CD8-positive, alpha-beta memory T cell (primary cell): ENCODE measurements at regions of chr14 and their contacts with region 1.

Region 1: DNA sequence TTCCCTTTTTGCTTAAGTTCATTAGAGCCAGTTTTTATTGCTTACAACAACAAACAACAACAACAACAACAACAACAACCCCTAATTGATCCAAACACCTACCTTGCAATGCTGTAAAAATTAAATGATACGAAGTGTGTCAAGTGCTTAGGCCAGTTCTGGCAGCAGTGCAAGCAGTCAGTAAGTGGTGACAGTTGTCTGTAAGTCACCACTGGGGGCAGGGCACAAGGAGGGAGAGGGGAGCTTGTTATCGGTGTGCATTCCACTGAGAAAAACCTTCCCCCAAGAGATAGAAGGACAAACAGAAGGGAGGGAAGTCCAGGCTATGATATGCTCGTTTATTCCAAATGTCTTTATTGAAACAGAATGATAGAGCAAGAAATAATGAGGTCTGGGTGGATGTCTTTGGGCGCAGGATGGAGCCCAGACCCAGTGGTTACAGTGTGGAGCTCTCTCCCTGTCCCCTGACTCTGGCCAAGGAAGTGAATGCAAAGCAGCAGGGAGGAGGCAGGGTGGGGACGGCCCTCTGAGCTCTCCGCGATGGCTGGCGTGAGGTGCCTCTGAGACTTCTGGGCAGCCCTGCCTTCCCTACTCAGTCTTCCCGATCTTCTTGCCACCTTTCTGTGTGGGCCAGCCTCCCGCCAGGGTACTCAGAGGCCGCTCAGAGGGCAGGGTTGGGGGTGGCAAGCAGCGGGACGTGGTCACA is 6.5 kb downstream of the SLC22A17 start:
- DNase-seq: no peak
- H3K4me3 ChIP-seq: no peak overlapping the region
- H3K4me3 Mint-ChIP-seq: no peak overlapping the region
- H3K27ac ChIP-seq: no peak overlapping the region
- H3K27ac Mint-ChIP-seq: no peak overlapping the region
- H3K4me1 ChIP-seq: no peaks in the 10 kb centered on the region
- H3K4me1 Mint-ChIP-seq: peaks cover 1 to 2% (median 2%) of the 10 kb centered on the region in 3 donors
- H3K27me3 ChIP-seq: no peaks in the 10 kb centered on the region
- H3K27me3 Mint-ChIP-seq: peaks cover 11 to 40% of the 10 kb centered on the region in 2 donors

Region 2: GRCh38 chr14:23186913-23187654 is 159.1 kb before region 1 on chr14:
- CTCF ChIA-PET with region 1: no interaction called
- POLR2A ChIA-PET with region 1: interaction called, 17 read pairs
- DNase-seq: peak in 1 of 5 donors; percentile 41
- H3K4me3 ChIP-seq: no peak overlapping the region
- H3K4me3 Mint-ChIP-seq: no peak overlapping the region
- H3K27ac ChIP-seq: no peak overlapping the region
- H3K27ac Mint-ChIP-seq: no peak overlapping the region
- H3K4me1 ChIP-seq: peaks cover 8% of the 10 kb centered on the region
- H3K4me1 Mint-ChIP-seq: no peaks in the 10 kb centered on the region
- H3K27me3 ChIP-seq: no peaks in the 10 kb centered on the region
- H3K27me3 Mint-ChIP-seq: peaks cover 4 to 20% of the 10 kb centered on the region in 2 donors

Region 3: DNA sequence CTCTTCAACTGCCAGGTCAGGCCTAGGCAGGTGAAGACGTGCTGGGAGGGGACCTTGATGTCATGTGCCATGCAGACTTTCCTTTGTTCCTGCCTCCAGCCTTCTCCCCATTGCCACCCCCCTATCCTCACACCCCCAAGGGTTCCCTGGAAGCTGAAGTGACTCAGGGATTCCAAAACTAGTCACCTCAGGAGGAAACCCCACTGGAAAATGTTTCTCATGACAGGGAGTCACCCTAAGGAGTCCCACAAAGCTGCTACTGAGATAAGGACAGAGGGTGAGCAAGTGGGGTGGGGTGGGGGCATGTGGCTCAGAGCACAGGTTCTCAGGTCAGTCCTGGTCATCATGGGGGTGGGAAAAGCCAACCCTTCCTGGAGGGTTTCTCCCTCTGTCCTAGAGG is 24.1 kb after region 1 on chr14:
- CTCF ChIA-PET with region 1: no interaction called
- POLR2A ChIA-PET with region 1: no interaction called
- DNase-seq: no peak
- H3K4me3 ChIP-seq: no peak overlapping the region
- H3K4me3 Mint-ChIP-seq: no peak overlapping the region
- H3K27ac ChIP-seq: no peak overlapping the region
- H3K27ac Mint-ChIP-seq: peak overlapping the region in 1 of 8 donors; percentile 19
- H3K4me1 ChIP-seq: no peaks in the 10 kb centered on the region
- H3K4me1 Mint-ChIP-seq: no peaks in the 10 kb centered on the region
- H3K27me3 ChIP-seq: peaks cover 5% of the 10 kb centered on the region
- H3K27me3 Mint-ChIP-seq: peaks cover 17 to 26% of the 10 kb centered on the region in 2 donors

Region 4: DNA sequence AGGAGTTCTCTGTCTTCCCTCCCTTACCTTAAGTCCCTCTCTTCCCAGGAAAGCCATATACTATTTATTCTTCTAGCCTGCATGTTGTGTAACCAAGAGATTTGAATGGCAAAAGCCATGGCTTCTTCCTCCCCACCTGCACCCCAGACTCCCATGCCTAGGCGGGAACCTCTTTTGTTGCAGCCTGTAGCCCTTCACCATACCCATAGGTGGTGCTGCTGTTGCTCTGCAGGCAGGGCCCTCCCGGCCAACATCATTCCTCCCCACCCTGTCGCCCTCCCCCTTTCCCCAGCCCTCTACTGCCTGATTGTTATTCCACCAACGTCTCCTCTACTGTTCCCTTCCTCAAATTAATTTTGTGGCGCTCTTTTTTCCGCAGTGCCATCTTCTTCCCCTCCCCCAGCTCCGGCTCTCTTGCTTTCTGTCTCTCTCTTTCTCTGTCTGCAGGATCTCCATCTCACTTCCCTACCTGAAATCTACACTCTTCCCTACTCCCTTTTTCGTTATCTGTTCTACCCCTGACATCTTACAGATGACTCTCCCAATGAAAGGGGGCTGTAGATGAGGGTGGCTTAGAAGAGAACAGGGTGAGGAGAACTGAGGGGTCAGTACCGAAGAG is 137.2 kb after region 1 on chr14:
- CTCF ChIA-PET with region 1: no interaction called
- POLR2A ChIA-PET with region 1: no interaction called
- DNase-seq: no peak
- H3K4me3 ChIP-seq: no peak overlapping the region
- H3K4me3 Mint-ChIP-seq: no peak overlapping the region
- H3K27ac ChIP-seq: no peak overlapping the region
- H3K27ac Mint-ChIP-seq: no peak overlapping the region
- H3K4me1 ChIP-seq: no peaks in the 10 kb centered on the region
- H3K4me1 Mint-ChIP-seq: peaks cover 1 to 2% (median 2%) of the 10 kb centered on the region in 3 donors
- H3K27me3 ChIP-seq: no peaks in the 10 kb centered on the region
- H3K27me3 Mint-ChIP-seq: no peaks in the 10 kb centered on the region